ENCODE measurements at regions of chr19 and their contacts with region 1.

Region 1: DNA sequence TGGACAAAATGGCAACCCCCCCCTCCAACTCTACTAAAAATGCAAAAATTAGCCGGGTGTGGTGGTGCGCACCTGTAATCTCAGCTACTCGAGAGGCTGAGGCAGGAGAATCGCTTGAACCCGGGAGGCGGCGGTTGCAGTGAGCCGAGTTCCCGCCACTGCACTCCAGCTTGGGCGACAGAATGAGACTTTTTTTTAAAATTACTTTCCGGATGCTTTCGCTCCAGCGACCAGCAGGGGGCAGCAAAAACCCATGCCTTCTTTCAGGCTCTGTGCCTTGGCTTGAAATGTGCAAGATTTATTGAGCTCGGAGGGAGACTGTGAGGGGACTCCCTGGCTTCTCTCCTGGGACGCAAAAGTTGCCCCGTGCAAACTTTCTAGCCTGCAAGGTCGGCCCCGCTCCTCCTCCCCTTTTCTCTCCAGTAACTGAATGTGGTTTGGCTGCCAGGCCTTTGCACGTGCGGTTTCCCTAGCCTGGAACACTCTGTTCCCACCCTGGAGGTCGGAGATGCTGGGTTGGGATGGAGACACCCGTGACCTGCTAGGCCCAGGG is 61.4 kb upstream of the NFIC start:
- DNase-seq: peak; percentile 89
- H3K4me3 Mint-ChIP-seq: no peak overlapping the region
- H3K27ac Mint-ChIP-seq: no peak overlapping the region
- H3K4me1 Mint-ChIP-seq: no peaks in the 10 kb centered on the region
- H3K27me3 Mint-ChIP-seq: peaks cover 26% of the 10 kb centered on the region

Region 2: DNA sequence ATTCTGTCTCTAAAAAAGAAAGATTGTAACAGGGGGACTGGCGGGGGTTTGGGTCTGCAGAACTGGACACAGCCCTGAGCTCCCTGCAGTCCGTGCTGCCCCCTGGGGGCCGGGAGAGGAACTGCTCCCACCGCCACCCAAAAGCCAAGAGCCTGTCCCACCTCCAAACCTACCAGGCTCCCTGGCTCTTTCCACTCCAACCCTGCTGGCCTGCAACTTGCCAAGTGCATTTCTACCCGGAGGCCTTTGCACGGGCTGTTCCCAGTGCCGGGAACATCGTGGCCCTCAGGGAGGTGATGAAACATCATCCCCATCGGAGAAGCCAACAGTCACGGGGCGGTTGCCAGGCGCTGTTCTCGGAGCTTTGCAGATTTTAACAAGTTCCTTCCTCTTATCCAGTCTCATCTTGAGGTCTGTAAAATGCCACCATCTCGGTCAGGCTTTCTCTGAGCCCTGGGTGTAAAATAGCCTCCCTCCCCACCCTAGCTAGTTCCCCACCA is 124.7 kb after region 1 on chr19:
- CTCF ChIA-PET with region 1: interaction called, 13 read pairs
- intact Hi-C with region 1: no loop called
- DNase-seq: peak; percentile 85
- H3K4me3 Mint-ChIP-seq: no peak overlapping the region
- H3K27ac Mint-ChIP-seq: no peak overlapping the region
- H3K4me1 Mint-ChIP-seq: peaks cover 6% of the 10 kb centered on the region
- H3K27me3 Mint-ChIP-seq: no peaks in the 10 kb centered on the region

Region 3: GRCh38 chr19:3471954-3472655 is 167.2 kb after region 1 on chr19:
- CTCF ChIA-PET with region 1: interaction called, 10 read pairs
- intact Hi-C with region 1: loop called (anchors 5 kb)
- DNase-seq: peak; percentile 40
- H3K4me3 Mint-ChIP-seq: no peak overlapping the region
- H3K27ac Mint-ChIP-seq: no peak overlapping the region
- H3K4me1 Mint-ChIP-seq: no peaks in the 10 kb centered on the region
- H3K27me3 Mint-ChIP-seq: no peaks in the 10 kb centered on the region

Region 4: GRCh38 chr19:3479834-3480215 is 174.9 kb after region 1 on chr19:
- CTCF ChIA-PET with region 1: interaction called, 23 read pairs
- intact Hi-C with region 1: no loop called
- DNase-seq: peak; percentile 41
- H3K4me3 Mint-ChIP-seq: no peak overlapping the region
- H3K27ac Mint-ChIP-seq: no peak overlapping the region
- H3K4me1 Mint-ChIP-seq: peaks cover 9% of the 10 kb centered on the region
- H3K27me3 Mint-ChIP-seq: no peaks in the 10 kb centered on the region

Region 5: DNA sequence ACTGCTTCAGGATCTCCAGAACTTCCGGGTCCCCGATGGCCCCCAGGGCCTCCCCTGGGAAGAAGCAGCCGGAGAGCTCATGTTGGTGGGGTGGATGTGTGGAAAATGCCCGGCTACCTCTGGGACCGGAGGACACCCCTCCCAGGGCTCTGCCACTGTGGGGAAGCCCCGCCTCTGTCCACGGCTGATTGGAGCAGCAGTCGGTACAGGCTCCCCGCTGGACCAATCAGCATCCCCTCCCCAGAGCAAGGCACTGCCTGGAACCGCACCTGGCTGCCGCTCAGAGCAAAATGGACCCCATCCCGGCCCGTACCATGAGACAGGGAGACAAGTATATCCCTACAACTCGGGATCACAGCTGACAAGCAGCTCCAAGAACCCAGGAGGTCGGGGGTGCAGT is 189.1 kb after region 1 on chr19:
- CTCF ChIA-PET with region 1: interaction called, 11 read pairs
- intact Hi-C with region 1: no loop called
- DNase-seq: peak; percentile 75
- H3K4me3 Mint-ChIP-seq: peak overlapping the region; percentile 45
- H3K27ac Mint-ChIP-seq: peak overlapping the region; percentile 86
- H3K4me1 Mint-ChIP-seq: peaks cover 25% of the 10 kb centered on the region
- H3K27me3 Mint-ChIP-seq: no peaks in the 10 kb centered on the region

Measured in activated naive CD4-positive, alpha-beta T cell treated with anti-CD3 and anti-CD28 coated beads for 36 hours (primary cell).